Activated CD4-positive, alpha-beta T cell treated with anti-CD3 and anti-CD28 coated beads, Interleukin-2, amount 10 ng/mL, durations not matched to agents 24 days and 14 days (primary cell): ENCODE measurements at regions of chr5 and their contacts with region 1.

Region 1: DNA sequence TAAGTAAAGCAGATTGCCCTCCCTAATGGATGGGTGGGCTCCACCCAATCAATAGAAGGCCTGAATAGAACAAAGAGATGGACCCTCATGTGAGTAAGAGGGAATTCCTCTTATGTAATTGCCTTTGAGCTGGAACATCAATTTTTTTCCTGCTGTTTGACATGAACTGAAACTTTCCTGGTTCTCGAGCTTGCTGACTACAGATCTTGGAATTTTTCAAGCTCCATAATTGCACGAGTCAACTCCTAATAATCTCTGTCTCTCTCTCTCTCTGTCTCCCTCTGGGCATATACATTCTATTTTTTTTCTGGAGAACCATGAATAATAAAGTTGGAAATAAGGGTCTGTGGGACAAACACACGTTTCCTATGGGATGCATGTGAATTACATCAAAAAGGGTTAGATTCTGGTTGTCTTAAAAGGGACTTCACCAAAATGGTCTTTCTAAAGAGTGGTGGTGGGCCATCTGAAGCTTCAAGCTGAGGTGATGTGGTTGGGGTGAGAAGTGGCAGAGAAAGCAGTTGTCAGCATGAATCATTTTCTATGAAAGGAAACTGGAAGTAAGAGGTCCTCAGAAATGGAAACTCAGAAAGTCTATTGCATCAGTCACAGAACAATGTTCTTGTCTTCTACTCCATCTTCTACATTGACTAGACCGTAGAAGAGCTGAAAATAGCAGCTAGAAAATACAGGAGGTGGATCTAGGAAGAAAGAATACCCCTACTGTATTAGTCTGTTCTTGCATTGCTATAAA is 47.0 kb upstream of the HOMER1 start:
- DNase-seq: peak; percentile 76
- H3K4me3 Mint-ChIP-seq: peak overlapping the region; percentile 61
- H3K27ac Mint-ChIP-seq: peak overlapping the region; percentile 97
- H3K4me1 Mint-ChIP-seq: peaks cover 31% of the 10 kb centered on the region
- H3K27me3 Mint-ChIP-seq: no peaks in the 10 kb centered on the region

Region 2: GRCh38 chr5:79514391-79515105 is 46.4 kb before region 1 on chr5:
- intact Hi-C with region 1: loop called (anchors 1 kb)
- DNase-seq: peak; percentile 97
- H3K4me3 Mint-ChIP-seq: peak overlapping the region; percentile 88
- H3K27ac Mint-ChIP-seq: peak overlapping the region; percentile 97
- H3K4me1 Mint-ChIP-seq: peaks cover 32% of the 10 kb centered on the region
- H3K27me3 Mint-ChIP-seq: peaks cover 23% of the 10 kb centered on the region

Region 3: GRCh38 chr5:79602889-79603288 is 41.9 kb after region 1 on chr5:
- intact Hi-C with region 1: no loop called
- DNase-seq: no peak
- H3K4me3 Mint-ChIP-seq: no peak overlapping the region
- H3K27ac Mint-ChIP-seq: no peak overlapping the region
- H3K4me1 Mint-ChIP-seq: peaks cover under 1% of the 10 kb centered on the region
- H3K27me3 Mint-ChIP-seq: peaks cover 26% of the 10 kb centered on the region

Region 4: GRCh38 chr5:80231243-80231642 is 670.3 kb after region 1 on chr5:
- intact Hi-C with region 1: no loop called
- DNase-seq: no peak
- H3K4me3 Mint-ChIP-seq: no peak overlapping the region
- H3K27ac Mint-ChIP-seq: no peak overlapping the region
- H3K4me1 Mint-ChIP-seq: peaks cover 36% of the 10 kb centered on the region
- H3K27me3 Mint-ChIP-seq: no peaks in the 10 kb centered on the region